Naive thymus-derived CD4-positive, alpha-beta T cell (primary cell): ENCODE measurements at regions of chr10 and their contacts with region 1.

Region 1: GRCh38 chr10:119061352-119061751 is 19.3 kb downstream of the EIF3A start:
- DNase-seq: no peak
- ATAC-seq: no peak
- H3K4me3 ChIP-seq: no peak overlapping the region
- H3K4me3 Mint-ChIP-seq: no peak overlapping the region
- H3K27ac ChIP-seq: no peak overlapping the region
- H3K27ac Mint-ChIP-seq: peak overlapping the region in 4 of 9 donors; percentile 18 to 52 (median 32)
- H3K4me1 ChIP-seq: no peaks in the 10 kb centered on the region
- H3K4me1 Mint-ChIP-seq: peaks cover 6 to 24% (median 10%) of the 10 kb centered on the region in 7 donors
- H3K27me3 ChIP-seq: no peaks in the 10 kb centered on the region
- H3K27me3 Mint-ChIP-seq: no peaks in the 10 kb centered on the region

Region 2: GRCh38 chr10:118522791-118523498 is 538.4 kb before region 1 on chr10:
- CTCF ChIA-PET with region 1: no interaction called
- POLR2A ChIA-PET with region 1: no interaction called
- intact Hi-C with region 1: no loop called
- DNase-seq: no peak
- ATAC-seq: peak; percentile 45
- H3K4me3 ChIP-seq: no peak overlapping the region
- H3K4me3 Mint-ChIP-seq: peak overlapping the region in 1 of 10 donors; percentile 13
- H3K27ac ChIP-seq: no peak overlapping the region
- H3K27ac Mint-ChIP-seq: peak overlapping the region in 1 of 9 donors; percentile 69
- H3K4me1 ChIP-seq: no peaks in the 10 kb centered on the region
- H3K4me1 Mint-ChIP-seq: peaks cover 0 to 34% (median 0%) of the 10 kb centered on the region in 7 donors
- H3K27me3 ChIP-seq: no peaks in the 10 kb centered on the region
- H3K27me3 Mint-ChIP-seq: peaks cover 5 to 52% (median 42%) of the 10 kb centered on the region in 5 donors

Region 3: DNA sequence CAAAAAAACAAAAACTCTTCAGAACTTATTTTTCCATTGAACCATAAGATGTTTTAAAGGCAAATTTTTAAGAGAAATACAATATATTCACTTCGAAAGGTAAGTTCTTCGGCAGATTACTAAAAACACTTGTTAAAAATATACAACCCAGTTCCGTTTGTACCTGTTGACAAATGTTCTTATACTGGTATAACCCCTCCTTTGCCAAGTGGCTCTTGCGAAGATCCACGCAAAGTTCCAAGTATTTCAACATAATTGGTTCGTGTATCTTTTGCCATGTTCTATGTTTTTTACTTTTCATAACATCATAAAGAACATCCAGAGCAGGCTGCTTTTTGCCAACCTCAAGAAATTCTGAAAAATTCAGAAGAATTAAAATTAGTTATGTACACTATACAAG is 12.2 kb after region 1 on chr10:
- CTCF ChIA-PET with region 1: no interaction called
- POLR2A ChIA-PET with region 1: no interaction called
- intact Hi-C with region 1: loop called in 1 of 2 experiments (anchors 2 kb)
- DNase-seq: no peak
- ATAC-seq: no peak
- H3K4me3 ChIP-seq: no peak overlapping the region
- H3K4me3 Mint-ChIP-seq: peak overlapping the region in 2 of 10 donors; percentile 27 to 37
- H3K27ac ChIP-seq: no peak overlapping the region
- H3K27ac Mint-ChIP-seq: peak overlapping the region in 7 of 9 donors; percentile 5 to 79 (median 51)
- H3K4me1 ChIP-seq: peaks cover 15 to 17% of the 10 kb centered on the region in 2 donors
- H3K4me1 Mint-ChIP-seq: peaks cover 20 to 51% (median 46%) of the 10 kb centered on the region in 7 donors
- H3K27me3 ChIP-seq: no peaks in the 10 kb centered on the region
- H3K27me3 Mint-ChIP-seq: no peaks in the 10 kb centered on the region

Region 4: DNA sequence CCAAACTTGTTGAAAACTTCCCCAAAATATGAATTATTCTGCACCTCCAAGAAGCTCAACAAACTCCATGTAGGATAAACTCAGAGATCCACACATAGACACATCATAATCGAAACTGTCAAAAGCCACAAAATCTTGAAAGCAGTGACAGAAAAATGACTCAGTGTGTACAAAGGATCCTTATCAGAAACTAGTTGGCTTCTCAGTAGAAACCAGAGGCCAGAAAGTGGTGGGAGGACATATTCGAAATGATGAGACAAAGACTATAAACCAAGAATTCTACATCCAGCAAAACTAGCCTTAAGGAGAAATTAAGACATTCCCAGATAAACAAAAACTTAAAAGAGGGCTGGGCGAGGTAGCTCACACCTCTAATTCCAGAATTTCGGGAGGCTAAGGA is 772.8 kb after region 1 on chr10:
- CTCF ChIA-PET with region 1: no interaction called
- POLR2A ChIA-PET with region 1: no interaction called
- intact Hi-C with region 1: loop called in 1 of 2 experiments (anchors 5 kb)
- DNase-seq: no peak
- ATAC-seq: no peak
- H3K4me3 ChIP-seq: no peak overlapping the region
- H3K4me3 Mint-ChIP-seq: peak overlapping the region in 1 of 10 donors; percentile 47
- H3K27ac ChIP-seq: no peak overlapping the region
- H3K27ac Mint-ChIP-seq: peak overlapping the region; percentile 22 to 85 (median 78)
- H3K4me1 ChIP-seq: no peaks in the 10 kb centered on the region
- H3K4me1 Mint-ChIP-seq: peaks cover 0 to 18% (median 8%) of the 10 kb centered on the region in 7 donors
- H3K27me3 ChIP-seq: no peaks in the 10 kb centered on the region
- H3K27me3 Mint-ChIP-seq: no peaks in the 10 kb centered on the region